ENCODE measurements at regions of chr2 and their contacts with region 1.

Region 1: DNA sequence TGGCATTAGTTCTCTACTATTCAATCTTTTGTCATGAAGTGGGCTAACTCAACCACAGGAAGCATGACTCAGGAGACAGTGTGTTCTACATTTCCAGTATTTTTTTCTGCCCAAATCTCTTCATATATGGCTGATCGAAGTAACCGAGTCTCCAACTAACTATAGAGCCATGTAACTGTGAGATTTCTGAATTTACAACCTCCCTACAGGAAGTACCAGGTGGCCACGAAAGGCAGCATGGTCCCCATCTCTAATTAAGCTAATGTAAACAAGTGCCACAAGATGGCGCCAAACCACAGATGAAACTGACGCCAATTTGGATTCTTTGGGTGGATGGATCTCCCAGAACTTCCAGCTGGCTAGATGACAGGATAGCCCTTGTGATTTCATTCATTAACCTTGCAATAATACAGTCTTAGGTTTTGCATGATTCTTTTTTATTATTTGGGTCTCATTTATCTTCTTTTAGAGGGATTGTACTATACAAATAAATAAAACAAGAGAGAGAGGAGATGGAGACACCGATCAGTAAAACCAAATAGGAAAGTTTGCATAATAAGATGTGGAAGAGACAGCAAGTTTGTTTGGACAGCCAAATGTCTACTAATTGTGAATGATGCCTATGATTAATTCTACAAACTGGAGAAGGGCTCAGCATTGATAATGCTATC is 18.3 kb upstream of the ARHGAP15 start:
- DNase-seq: peak; percentile 14 to 58
- ATAC-seq: peak in 6 of 8 donors; percentile 37 to 70 (median 48)
- H3K4me3 ChIP-seq: no peak overlapping the region
- H3K27ac ChIP-seq: no peak overlapping the region
- H3K4me1 ChIP-seq: peaks cover 0 to 6% (median 0%) of the 10 kb centered on the region in 9 donors
- H3K27me3 ChIP-seq: no peaks in the 10 kb centered on the region
- CTCF ChIP-seq: peak; percentile 20 to 77 (median 62)

Region 2: DNA sequence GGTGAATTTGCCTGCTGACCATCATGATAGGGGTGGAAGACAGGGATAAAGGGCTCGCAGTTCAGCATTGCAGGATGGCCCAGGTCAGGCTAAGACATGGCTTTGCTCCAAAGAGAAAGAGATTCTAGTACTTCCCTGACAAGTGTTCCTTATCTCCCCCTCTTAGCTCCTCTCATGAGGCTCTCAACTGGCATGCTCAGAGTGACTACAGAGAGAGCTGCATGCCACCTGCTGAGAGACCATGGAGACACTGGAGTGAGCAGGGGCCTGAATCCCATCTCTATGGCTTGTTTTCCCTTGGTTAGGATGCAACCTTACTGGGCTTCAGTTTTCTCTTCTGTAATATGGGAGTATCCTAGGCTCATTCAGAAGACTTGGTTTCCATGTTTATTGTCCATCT is 112.7 kb after region 1 on chr2:
- intact Hi-C with region 1: loop called in 2 of 10 experiments (anchors 2 to 10 kb)
- DNase-seq: no peak
- ATAC-seq: no peak
- H3K4me3 ChIP-seq: no peak overlapping the region
- H3K27ac ChIP-seq: no peak overlapping the region
- H3K4me1 ChIP-seq: no peaks in the 10 kb centered on the region
- H3K27me3 ChIP-seq: no peaks in the 10 kb centered on the region
- CTCF ChIP-seq: no peak

Region 3: GRCh38 chr2:143229952-143230351 is 119.1 kb after region 1 on chr2:
- intact Hi-C with region 1: loop called in 1 of 10 experiments (anchors 10 kb)
- DNase-seq: no peak
- ATAC-seq: no peak
- H3K4me3 ChIP-seq: no peak overlapping the region
- H3K27ac ChIP-seq: no peak overlapping the region
- H3K4me1 ChIP-seq: no peaks in the 10 kb centered on the region
- H3K27me3 ChIP-seq: no peaks in the 10 kb centered on the region
- CTCF ChIP-seq: no peak

Region 4: GRCh38 chr2:143246815-143247744 is 136.2 kb after region 1 on chr2:
- intact Hi-C with region 1: loop called in 4 of 10 experiments (anchors 10 kb)
- DNase-seq: no peak
- ATAC-seq: no peak
- H3K4me3 ChIP-seq: peak overlapping the region in 1 of 10 donors; percentile 11
- H3K27ac ChIP-seq: peak overlapping the region in 1 of 10 donors; percentile 11
- H3K4me1 ChIP-seq: peaks cover 0 to 12% (median 0%) of the 10 kb centered on the region in 9 donors
- H3K27me3 ChIP-seq: no peaks in the 10 kb centered on the region
- CTCF ChIP-seq: no peak